ENCODE measurements at regions of chr1 and their contacts with region 1.

Region 1: DNA sequence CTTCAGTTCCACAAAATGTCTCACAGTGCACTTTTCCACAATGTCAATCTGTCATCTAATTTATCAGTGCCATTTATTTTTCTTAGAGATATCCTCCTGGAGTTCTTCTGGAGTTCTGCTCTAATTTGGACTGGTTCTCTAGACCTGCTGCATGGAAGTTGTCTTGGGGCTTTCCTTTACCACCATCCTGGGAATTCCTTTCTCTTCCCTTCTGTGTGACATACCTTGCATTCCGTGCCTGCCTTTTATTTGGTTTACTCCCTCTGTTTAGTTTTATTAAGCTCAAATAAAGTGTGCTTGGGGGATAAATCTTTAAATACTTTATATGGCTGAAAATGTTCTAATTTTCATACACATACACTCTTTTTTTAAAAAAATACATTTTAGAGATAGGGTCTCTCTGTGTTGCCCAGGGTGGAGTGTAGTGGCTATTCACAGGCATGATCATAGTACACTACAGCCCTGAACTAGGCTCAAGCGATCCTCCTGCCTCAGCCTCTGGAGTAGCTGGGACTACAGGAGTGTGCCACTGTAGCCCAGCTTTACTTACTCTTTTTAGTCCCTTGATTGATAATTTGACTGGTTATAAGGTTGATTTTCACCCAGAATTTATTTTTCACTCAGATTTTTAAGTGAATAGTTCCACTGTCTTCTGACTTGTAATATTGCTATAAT is 14.4 kb downstream of the MTF2 start:
- ATAC-seq: no peak
- H3K4me3 ChIP-seq: no peak overlapping the region
- H3K27ac ChIP-seq: no peak overlapping the region
- H3K4me1 ChIP-seq: peaks cover 0 to 6% of the 10 kb centered on the region in 2 donors

Region 2: GRCh38 chr1:93489756-93490155 is 396.3 kb after region 1 on chr1:
- in situ Hi-C with region 1: loop called in 2 of 9 experiments (anchors 10 kb)
- ATAC-seq: no peak
- H3K4me3 ChIP-seq: no peak overlapping the region
- H3K27ac ChIP-seq: no peak overlapping the region
- H3K4me1 ChIP-seq: no peaks in the 10 kb centered on the region